AG04450 (cell line): ENCODE measurements at regions of chr18 and their contacts with region 1.

Region 1: GRCh38 chr18:12327510-12328178 is 19.6 kb downstream of the TUBB6 start:
- DNase-seq: no peak
- H3K4me3 ChIP-seq: no peak overlapping the region
- H3K27ac ChIP-seq: peak overlapping the region; percentile 61
- H3K27me3 ChIP-seq: no peaks in the 10 kb centered on the region
- CTCF ChIP-seq: peak; percentile 83

Region 2: GRCh38 chr18:11925800-11926481 is 401.7 kb before region 1 on chr18:
- CTCF ChIA-PET with region 1: no interaction called
- POLR2A ChIA-PET with region 1: no interaction called
- DNase-seq: no peak
- H3K4me3 ChIP-seq: no peak overlapping the region
- H3K27ac ChIP-seq: no peak overlapping the region
- H3K27me3 ChIP-seq: peaks cover 8% of the 10 kb centered on the region
- CTCF ChIP-seq: no peak

Region 3: GRCh38 chr18:12346240-12346565 is 18.6 kb after region 1 on chr18:
- CTCF ChIA-PET with region 1: interaction called, 11 read pairs
- POLR2A ChIA-PET with region 1: no interaction called
- DNase-seq: no peak
- H3K4me3 ChIP-seq: no peak overlapping the region
- H3K27ac ChIP-seq: no peak overlapping the region
- H3K27me3 ChIP-seq: no peaks in the 10 kb centered on the region
- CTCF ChIP-seq: no peak

Region 4: DNA sequence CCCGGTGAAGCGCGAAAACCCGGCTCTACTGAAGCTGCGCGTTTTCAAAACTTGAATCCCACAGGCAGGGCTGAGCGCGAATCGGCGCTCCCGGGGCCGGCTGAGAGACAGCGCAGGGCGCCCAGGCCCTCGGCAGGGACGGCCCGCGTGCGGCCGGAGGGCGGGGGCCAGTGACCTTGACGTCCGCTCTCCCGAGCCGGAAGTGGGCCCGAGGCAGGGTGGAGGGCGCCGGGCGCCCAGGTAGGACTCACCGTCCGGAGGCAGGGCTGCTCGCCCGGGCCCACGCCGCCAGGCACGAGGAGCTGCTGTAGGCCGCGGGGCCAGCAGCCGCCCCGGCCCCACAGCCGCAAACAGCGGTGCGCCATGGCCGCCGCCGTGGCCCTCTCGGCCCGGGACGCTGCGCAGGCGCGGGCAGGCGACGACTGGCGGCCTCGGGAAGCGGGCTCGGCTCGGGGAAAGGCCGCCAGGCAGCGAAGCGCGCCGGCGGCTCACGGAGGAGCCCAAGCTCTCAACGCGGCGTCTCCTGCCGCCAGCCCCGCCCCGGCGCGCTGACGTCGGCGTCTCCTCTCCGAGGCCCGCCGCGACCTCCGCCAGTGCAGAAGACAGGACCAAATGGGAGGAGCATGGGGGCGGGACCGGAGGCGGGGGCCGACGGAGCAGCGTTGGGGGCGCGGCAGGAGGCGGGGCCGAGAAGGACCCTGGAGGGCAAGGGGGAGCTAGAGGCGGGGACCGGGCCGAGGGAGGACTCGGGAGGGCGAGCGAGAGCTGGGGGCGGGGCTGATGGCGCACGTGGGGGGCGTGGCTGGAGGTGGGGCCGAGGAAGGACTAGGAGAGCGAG is 49.3 kb after region 1 on chr18 and contains the start of gene AFG3L2:
- CTCF ChIA-PET with region 1: interaction called, 5 read pairs
- POLR2A ChIA-PET with region 1: interaction called, 10 read pairs
- DNase-seq: peak; percentile 98
- H3K4me3 ChIP-seq: peak within 1 kb of the TSS; percentile 82
- H3K27ac ChIP-seq: peak within 1 kb of the TSS; percentile 98
- H3K27me3 ChIP-seq: no peaks in the 10 kb centered on the region
- CTCF ChIP-seq: no peak
- polyA plus RNA-seq, gene AFG3L2: 30.3 and 38.0 TPM in 2 replicates

Region 5: DNA sequence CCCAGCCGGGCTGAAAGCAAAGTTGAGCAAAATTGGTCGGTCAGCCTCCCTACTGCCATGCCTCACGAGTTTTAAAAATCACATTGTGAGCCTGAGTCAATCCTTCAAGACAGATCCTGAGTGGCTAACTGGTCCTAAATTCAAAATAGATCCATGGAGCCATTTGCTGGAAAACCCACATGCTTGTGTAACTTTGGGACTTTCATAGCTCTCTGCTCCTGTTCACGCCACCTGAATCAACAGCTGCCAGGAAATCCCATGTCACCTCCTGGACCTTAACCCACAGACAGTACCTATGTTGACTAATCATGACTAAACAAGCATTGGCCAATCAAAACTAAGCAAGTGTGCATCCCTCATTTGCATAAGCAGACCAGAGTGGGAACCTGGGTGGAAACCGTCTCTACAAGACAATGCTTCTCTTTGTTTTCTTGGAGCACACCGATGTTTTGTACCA is 848.1 kb after region 1 on chr18:
- CTCF ChIA-PET with region 1: no interaction called
- POLR2A ChIA-PET with region 1: interaction called, 10 read pairs
- DNase-seq: no peak
- H3K4me3 ChIP-seq: no peak overlapping the region
- H3K27ac ChIP-seq: no peak overlapping the region
- H3K27me3 ChIP-seq: no peaks in the 10 kb centered on the region
- CTCF ChIP-seq: no peak